BJ (cell line): ENCODE measurements at regions of chr11 and their contacts with region 1.

Region 1: DNA sequence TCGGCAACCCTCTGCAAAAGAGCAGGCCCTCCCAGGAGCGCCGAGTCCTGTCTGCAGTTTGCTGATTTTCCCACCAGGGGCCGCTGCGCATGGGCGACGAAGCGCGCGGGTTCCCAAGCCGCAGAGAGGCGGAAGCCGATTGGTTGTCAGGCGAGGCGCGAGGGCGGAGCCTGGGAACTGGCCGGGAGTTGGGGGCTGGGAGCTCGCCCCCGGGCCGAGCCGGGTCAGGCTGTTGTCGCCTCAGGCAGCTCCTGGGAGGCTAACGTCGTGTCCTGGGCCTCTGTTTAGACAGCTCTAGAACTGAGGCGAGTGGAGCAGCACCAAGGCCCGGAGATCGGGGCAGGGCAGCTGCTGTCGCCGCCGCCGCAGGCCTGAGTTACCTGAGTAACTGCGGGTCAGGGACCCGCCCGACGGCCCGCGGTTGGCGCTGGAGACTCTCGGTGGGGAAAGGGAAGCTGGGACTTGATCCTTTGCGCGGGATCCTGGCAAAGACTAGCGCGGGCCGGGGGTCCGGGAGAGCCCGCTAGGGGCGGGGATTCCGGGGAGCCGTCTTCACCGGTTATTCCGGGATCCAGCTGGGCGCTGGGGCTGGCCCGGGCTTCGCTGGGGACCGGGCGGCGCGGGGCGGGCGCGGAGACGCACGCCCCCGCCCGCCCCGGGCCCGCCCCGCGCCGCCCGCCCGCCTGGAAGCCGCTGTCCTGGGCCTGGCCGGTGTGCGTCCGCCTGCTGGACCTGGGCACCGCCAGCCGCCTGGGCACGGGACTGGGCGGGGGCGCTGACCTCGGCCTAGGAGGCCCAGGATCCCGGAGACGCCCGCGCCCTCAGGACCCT is at the start of gene STIM1:
- DNase-seq: peak; percentile 51
- H3K4me3 ChIP-seq: peak within 1 kb of the TSS; percentile 77
- H3K27me3 ChIP-seq: no peaks in the 10 kb centered on the region
- CTCF ChIP-seq: peak; percentile 96
- polyA plus RNA-seq, gene STIM1: 24.4 and 54.6 TPM in 2 replicates

Region 2: DNA sequence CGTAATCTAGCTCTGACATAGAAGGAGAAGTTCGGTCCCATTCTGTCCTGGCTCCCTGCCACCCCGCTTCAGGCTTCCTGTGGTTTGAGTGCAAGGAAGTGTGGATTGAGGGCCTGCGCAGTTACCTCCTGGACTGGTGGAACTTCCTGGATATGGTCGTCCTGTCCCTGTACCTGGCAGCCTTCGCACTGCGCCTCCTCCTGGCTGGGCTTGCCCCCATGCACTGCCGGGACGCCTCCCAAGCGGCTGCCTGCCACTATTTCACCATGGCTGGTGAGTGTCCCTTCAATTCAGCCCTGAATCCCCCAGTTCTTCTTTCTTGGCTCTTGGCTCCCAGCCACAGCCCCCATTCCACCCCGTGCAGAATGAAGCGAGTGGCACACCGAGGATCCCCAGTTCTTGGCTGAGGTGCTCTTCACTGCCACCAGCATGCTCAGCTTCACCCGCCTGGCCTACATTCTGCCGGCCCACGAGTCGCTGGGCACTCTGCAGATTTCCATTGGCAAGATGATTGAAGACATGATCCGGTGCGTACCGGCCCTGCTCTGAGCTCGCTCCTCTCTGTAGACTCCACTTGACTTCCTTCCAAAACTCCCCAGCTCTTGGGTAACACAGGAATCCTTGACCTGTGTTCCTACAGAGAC is 228.8 kb before region 1 on chr11:
- CTCF ChIA-PET with region 1: no interaction called
- POLR2A ChIA-PET with region 1: no interaction called
- DNase-seq: no peak
- H3K4me3 ChIP-seq: no peak overlapping the region
- H3K27me3 ChIP-seq: no peaks in the 10 kb centered on the region
- CTCF ChIP-seq: no peak

Region 3: DNA sequence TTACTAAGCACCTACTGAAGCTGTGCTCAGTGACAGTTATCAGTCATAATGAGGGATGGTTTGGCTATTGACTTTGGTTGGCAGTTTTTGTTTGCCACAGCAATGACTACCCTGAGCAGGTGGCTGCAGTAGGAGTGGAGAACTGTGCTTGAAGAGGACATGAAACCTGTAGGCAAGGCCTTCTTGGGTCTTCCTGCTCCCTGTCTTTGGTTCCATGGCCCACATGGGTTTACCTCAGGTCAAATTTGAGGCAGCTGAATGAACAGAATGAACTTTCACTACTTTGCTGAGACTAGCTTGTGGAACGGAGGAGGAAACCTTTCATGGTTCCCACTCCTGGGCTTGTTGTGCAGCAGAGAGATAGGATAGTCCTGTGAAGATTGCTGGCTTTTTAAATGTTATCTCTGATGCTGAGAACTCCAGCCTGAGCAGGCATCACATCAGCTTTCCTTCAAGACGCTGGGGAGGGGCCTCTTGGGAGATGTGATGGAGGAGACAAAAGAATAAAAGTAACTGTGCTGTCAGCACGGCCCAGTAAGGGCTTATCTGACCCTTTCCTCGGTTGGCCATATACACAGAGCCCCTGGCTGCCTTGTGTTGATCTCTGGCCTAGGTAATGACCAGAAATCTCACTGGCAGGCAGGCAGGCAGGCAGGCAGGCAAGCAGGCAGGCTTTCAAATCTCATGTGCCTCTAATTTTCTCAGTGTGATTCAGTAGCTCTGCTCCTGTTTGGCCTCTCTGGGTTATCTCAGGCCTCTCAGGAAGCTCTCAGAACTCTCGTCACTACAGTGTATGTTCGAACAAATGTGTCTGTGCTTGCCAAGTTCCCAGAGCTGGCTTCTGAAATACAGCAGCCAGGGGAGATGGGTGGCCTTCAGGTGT is 12.3 kb after region 1 on chr11:
- CTCF ChIA-PET with region 1: interaction called, 13 read pairs
- POLR2A ChIA-PET with region 1: no interaction called
- DNase-seq: no peak
- H3K4me3 ChIP-seq: no peak overlapping the region
- H3K27me3 ChIP-seq: no peaks in the 10 kb centered on the region
- CTCF ChIP-seq: no peak

Region 4: DNA sequence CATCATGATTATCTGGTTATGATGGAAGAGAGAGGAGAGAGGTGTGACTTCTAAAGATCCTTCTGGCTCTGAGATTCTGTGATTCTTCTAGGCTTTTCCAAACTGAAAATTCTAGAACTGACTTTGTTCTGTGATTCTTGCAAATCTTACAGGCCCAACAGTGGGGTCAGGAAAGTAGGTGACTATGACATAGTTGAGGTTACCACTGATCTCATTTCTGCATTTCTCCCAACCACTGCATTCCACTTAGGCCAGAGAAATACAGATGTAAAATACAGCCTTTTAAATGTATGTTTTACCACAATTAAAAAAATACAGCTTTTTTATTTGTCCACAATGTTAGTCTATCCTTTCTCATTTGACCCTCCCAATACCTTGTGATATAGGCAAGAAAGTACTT is 84.0 kb after region 1 on chr11:
- CTCF ChIA-PET with region 1: interaction called, 21 read pairs
- POLR2A ChIA-PET with region 1: no interaction called
- DNase-seq: peak; percentile 71
- H3K4me3 ChIP-seq: no peak overlapping the region
- H3K27me3 ChIP-seq: no peaks in the 10 kb centered on the region
- CTCF ChIP-seq: no peak

Region 5: DNA sequence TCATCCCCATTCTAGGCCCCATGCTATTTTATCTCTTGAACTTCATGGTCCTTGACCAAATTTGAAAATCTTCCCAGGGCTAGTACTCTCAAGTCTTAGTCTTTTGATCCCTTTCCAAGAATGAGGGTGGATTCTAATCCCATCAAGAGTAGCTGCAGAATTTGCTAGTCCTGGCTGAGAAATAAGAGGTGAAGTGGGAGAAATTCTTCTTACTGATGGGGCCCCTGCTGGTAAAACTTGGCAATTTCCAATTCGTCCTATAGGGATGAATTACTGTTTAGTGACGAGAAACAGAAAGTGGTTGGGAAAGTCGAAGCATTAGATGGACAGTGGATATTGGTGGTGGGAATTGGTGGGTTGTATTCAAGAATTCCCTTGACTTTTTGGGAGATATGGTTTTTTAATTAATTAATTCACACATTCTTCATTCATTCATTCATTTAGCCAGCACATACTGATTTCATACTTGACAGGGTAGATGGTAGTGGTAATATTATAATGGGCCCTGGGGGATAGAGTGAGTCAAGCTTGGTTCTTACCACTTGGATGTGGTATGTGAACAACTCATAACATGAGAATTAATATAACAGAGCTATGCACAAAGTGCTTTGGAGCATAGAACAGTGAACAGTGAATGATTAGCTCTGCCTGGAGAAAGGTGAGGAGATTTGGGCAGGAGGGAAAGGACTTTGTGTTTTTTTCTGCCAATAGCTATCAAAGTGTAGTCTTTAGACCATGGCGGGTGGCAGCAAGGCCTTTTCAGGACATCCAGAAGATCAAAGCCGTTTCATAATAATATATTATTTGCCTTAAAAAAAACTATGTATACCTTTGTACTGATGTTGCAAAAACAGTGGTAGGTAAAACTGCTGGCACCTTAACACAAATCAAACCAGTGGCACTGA is 104.1 kb after region 1 on chr11:
- CTCF ChIA-PET with region 1: interaction called, 17 read pairs
- POLR2A ChIA-PET with region 1: interaction called, 4 read pairs
- DNase-seq: no peak
- H3K4me3 ChIP-seq: no peak overlapping the region
- H3K27me3 ChIP-seq: no peaks in the 10 kb centered on the region
- CTCF ChIP-seq: 0 out of 2 replicates have a peak, but pooled peaks have one; percentile 15

Region 6: DNA sequence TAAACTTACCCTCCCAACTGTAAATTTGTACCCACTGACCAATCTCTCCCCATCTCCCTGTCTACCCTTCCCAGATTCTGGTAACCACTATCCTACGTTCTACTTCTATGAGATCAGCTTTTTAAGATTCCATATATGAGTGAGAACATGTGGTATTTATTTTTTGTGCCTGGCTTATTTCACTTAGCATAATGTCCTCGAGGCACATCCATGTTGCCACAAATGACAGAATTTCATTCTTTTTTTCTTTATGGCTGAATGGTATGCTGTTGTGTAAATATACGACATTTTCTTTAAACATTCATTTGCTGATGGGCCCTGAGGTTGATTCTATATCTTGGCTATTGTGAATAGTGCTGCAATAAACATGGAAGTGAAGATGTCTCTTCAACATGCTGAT is 164.7 kb after region 1 on chr11:
- CTCF ChIA-PET with region 1: interaction called, 14 read pairs
- POLR2A ChIA-PET with region 1: no interaction called
- DNase-seq: no peak
- H3K4me3 ChIP-seq: no peak overlapping the region
- H3K27me3 ChIP-seq: no peaks in the 10 kb centered on the region
- CTCF ChIP-seq: no peak

Region 7: DNA sequence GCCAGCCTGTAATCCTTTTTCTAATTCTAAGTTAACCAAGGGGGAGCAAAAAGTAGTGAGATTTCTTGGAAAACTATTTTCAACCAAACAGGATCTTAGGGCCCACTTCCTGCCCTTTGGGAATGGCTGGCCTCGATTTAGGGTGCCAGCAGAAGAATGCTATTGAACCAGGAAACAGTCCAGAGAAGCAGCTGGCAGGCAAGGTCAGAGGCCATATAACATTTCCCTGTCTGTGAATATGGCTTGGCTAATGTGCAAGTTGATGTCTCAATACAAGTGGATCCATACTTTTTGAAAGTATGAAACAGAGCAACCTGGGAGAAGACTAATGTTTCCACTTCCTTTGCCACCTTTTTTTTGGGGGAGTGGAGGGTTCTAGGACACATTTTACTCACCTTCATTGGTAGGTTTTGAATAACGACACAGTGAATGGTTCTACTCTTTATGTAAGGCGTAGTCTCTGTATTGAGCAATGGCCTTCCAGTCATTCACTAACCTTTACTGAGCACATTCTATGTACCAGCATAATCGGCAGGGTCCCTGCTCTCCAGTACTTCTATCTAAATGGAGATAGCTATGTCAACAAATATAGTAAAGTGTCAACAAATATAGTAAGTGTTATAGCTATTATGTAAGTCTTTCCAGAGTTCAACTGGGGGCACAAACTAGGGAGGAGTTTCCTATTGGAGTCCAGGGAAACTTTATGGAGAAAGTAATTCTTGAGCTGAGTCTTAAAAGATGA is 205.2 kb after region 1 on chr11:
- CTCF ChIA-PET with region 1: interaction called, 524 read pairs
- POLR2A ChIA-PET with region 1: no interaction called
- DNase-seq: no peak
- H3K4me3 ChIP-seq: no peak overlapping the region
- H3K27me3 ChIP-seq: no peaks in the 10 kb centered on the region
- CTCF ChIP-seq: no peak

Region 8: DNA sequence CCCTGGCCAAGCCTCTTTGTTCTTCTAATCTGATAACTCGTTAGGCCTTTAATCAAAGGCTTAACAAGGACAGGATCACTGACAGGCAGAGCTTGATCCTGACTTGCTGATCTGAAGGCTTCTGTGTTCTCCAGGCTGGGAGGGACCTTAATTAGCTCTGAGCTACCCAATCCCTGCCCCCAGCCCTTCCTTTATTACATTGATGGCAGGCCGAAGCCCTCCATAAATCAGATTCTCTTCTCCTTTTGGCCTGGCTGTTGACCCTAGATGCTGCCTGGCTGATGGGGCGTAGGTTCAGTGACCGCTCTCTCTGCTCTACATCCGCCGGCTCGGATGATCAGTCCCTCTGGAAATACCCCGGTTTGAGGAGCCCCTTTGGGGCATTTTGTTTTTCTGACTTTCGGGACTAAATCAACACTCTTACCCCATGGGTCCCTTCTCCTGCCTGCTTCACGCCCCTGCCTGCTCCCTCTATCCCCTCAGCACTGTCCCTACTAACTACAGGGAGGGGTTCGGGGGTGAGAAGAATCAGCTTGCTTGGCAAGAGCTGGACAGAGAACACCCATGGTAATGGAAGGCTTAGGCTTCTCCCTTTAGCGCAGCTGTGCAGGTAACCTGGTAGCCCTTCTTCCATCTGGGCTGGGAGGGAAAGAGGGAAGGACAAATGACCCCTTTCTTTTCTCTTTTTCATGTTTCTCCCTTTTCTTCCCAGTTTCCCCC is 229.4 kb after region 1 on chr11:
- CTCF ChIA-PET with region 1: interaction called, 29 read pairs
- POLR2A ChIA-PET with region 1: no interaction called
- DNase-seq: no peak
- H3K4me3 ChIP-seq: no peak overlapping the region
- H3K27me3 ChIP-seq: no peaks in the 10 kb centered on the region
- CTCF ChIP-seq: no peak